Naive thymus-derived CD8-positive, alpha-beta T cell (primary cell): ENCODE measurements at regions of chr19 and their contacts with region 1.

Region 1: GRCh38 chr19:21568816-21569493 is 63.6 kb downstream of the ZNF429 start:
- DNase-seq: peak; percentile 54 to 95 (median 86)
- ATAC-seq: peak; percentile 97
- H3K4me3 Mint-ChIP-seq: peak overlapping the region; percentile 91 to 100 (median 96)
- H3K27ac Mint-ChIP-seq: peak overlapping the region; percentile 89 to 100 (median 98)
- H3K4me1 Mint-ChIP-seq: peaks cover 20 to 37% (median 28%) of the 10 kb centered on the region in 4 donors
- H3K27me3 Mint-ChIP-seq: no peaks in the 10 kb centered on the region

Region 2: GRCh38 chr19:21586311-21587116 is 17.6 kb after region 1 on chr19:
- POLR2A ChIA-PET with region 1: interaction called, 44 read pairs
- DNase-seq: peak in 7 of 10 donors; percentile 14 to 41 (median 32)
- ATAC-seq: peak; percentile 75 to 78
- H3K4me3 Mint-ChIP-seq: peak overlapping the region in 9 of 10 donors; percentile 75 to 95 (median 89)
- H3K27ac Mint-ChIP-seq: peak overlapping the region in 8 of 10 donors; percentile 44 to 93 (median 86)
- H3K4me1 Mint-ChIP-seq: peaks cover 26 to 70% (median 34%) of the 10 kb centered on the region in 4 donors
- H3K27me3 Mint-ChIP-seq: peaks cover 0 to 2% (median 0%) of the 10 kb centered on the region in 5 donors